Colonic mucosa (tissue), 4 donors: ENCODE measurements at regions of chr6 and their contacts with region 1.

Region 1: DNA sequence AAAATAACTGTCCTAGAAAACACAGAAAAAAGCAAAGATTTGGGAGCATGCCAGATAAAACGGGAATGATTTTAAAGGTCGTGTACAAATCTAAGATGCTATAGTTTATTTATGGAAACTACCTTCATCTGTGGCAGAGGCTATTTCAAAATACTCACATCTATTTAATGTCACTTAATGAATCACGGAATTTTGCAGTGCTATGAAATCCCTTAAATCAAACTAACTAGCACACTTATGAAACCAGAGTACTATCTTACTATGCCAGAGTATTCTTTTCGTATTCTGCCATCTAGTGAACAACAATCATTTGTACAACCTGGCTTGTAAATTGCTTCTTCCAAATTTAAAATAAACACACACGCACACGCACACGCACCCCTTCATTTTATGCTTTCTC is 77.9 kb upstream of the BMP5 start:
- DNase-seq: no peak
- H3K4me3 ChIP-seq: no peak overlapping the region
- H3K27ac ChIP-seq: no peak overlapping the region
- H3K4me1 ChIP-seq: no peaks in the 10 kb centered on the region
- H3K27me3 ChIP-seq: no peaks in the 10 kb centered on the region
- CTCF ChIP-seq: no peak

Region 2: GRCh38 chr6:55445648-55446204 is 507.6 kb before region 1 on chr6:
- intact Hi-C with region 1: loop called (anchors 5 kb)
- DNase-seq: no peak
- H3K4me3 ChIP-seq: no peak overlapping the region
- H3K27ac ChIP-seq: no peak overlapping the region
- H3K4me1 ChIP-seq: no peaks in the 10 kb centered on the region
- H3K27me3 ChIP-seq: no peaks in the 10 kb centered on the region
- CTCF ChIP-seq: no peak